Naive thymus-derived CD8-positive, alpha-beta T cell (primary cell): ENCODE measurements at regions of chr1 and their contacts with region 1.

Region 1: GRCh38 chr1:100265931-100266740 is at the start of gene RTCA:
- DNase-seq: peak; percentile 91 to 98 (median 94)
- ATAC-seq: peak; percentile 95
- H3K4me3 Mint-ChIP-seq: peak within 1 kb of the TSS; percentile 96 to 100 (median 100)
- H3K27ac Mint-ChIP-seq: peak within 1 kb of the TSS; percentile 95 to 99 (median 98)
- H3K4me1 Mint-ChIP-seq: peaks cover 25 to 59% (median 57%) of the 10 kb centered on the region in 4 donors
- H3K27me3 Mint-ChIP-seq: no peaks in the 10 kb centered on the region
- polyA plus RNA-seq, gene RTCA: 13.8 to 18.0 (median 15.2) TPM

Region 2: DNA sequence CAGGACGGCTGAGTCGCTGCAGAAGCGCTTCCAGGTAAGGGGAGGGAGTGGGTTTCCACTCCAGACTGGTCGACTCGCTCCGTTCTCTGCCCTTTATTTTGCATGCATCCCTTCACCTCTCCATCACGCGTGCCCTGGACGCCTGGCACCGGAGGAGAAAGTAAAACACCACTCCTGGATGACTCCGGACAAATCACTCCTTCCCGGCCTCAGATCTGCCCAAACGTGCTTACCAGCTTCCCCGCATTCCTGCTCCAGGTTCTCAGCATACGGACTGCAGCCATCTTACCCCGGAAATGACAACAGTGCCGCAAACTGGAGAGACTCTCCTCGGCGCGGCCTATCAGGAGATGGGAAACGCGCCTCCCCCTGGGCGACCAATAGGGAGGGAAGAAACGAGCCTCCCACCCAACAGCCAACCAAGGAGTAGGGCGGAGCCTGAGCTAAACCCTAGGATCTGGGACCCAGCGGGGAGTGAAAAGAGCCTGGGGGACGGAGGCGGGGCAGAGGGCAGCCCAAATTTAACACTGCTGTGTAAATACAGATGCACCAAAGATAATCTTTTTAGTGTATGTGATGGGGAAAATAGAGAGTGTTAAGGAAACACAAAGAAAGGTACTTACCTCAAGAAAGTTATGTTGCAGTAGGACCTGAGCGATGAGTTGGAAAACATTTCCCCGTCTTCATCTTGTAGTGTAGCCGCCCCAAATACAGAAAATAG is 16.4 kb before region 1 on chr1 and contains the start of gene DBT:
- POLR2A ChIA-PET with region 1: interaction called, 24 read pairs
- DNase-seq: peak; percentile 75 to 95 (median 89)
- ATAC-seq: peak; percentile 99 to 100
- H3K4me3 Mint-ChIP-seq: no peak within 1 kb of the TSS
- H3K27ac Mint-ChIP-seq: peak within 1 kb of the TSS in 2 of 10 donors; percentile 16 to 71
- H3K4me1 Mint-ChIP-seq: peaks cover 9 to 29% (median 17%) of the 10 kb centered on the region in 4 donors
- H3K27me3 Mint-ChIP-seq: no peaks in the 10 kb centered on the region
- polyA plus RNA-seq, gene DBT: 5.2 to 7.2 (median 6.3) TPM